ENCODE measurements at regions of chr6 and their contacts with region 1.

Region 1: DNA sequence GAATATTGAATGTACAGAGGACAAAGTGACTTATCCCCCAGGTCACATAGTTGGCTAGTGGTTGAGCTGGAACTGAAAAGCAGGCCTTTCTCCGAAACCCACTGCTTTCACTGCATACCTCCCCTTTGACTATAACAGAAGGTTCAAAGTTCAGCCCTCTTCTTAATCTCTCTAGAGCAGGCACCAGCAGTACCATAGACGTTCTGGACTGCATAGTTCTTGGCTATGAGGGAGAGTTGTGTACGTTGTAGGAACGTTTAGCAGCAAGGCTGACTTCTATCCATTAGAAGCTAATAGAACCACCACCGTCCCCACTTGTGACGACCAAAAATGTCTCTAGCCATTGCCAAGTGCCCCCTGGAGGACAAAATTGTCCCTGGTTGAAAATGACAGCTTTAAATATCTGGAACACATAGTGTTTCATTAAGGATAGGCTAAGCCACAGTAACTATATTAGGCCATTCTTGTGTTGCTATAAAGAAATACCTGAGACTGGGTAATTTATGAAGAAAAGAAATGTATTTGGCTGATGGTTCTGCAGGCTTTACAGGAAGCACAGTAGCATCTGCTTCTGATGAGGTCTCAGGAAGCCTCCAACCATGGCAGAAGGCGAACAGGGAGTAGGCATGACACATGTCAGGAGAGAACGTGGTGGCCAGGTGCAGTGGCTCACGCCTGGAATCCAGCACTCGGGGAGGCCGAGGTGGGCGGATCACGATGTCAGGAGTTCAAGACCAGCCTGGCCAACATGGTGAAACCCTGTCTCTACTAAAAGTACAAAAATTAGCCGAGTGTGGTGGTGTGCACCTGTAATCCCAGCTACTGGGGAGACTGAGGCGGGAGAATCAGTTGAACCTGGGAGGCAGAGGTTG is 123.6 kb upstream of the MTHFD1L start:
- DNase-seq: peak in 1 of 2 experiments; percentile 34
- H3K4me3 ChIP-seq: no peak overlapping the region
- H3K4me3 Mint-ChIP-seq: peak overlapping the region; percentile 37
- H3K27ac Mint-ChIP-seq: peak overlapping the region; percentile 67
- H3K4me1 ChIP-seq: peaks cover 37% of the 10 kb centered on the region
- H3K4me1 Mint-ChIP-seq: peaks cover 41% of the 10 kb centered on the region
- H3K27me3 ChIP-seq: no peaks in the 10 kb centered on the region
- H3K27me3 Mint-ChIP-seq: no peaks in the 10 kb centered on the region
- CTCF ChIP-seq: peak in 1 of 2 experiments; percentile 37

Region 2: GRCh38 chr6:150720774-150721233 is 21.1 kb before region 1 on chr6:
- CTCF ChIA-PET with region 1: no interaction called
- POLR2A ChIA-PET with region 1: no interaction called
- intact Hi-C with region 1: loop called (anchors 1 kb)
- DNase-seq: peak; percentile 71 to 76
- H3K4me3 ChIP-seq: peak overlapping the region; percentile 12; the same call in 1 of the 2 replicates
- H3K4me3 Mint-ChIP-seq: peak overlapping the region; percentile 74
- H3K27ac Mint-ChIP-seq: peak overlapping the region; percentile 94
- H3K4me1 ChIP-seq: peaks cover 30% of the 10 kb centered on the region
- H3K4me1 Mint-ChIP-seq: peaks cover 39% of the 10 kb centered on the region
- H3K27me3 ChIP-seq: no peaks in the 10 kb centered on the region
- H3K27me3 Mint-ChIP-seq: no peaks in the 10 kb centered on the region
- CTCF ChIP-seq: peak; percentile 28 to 40

Region 3: DNA sequence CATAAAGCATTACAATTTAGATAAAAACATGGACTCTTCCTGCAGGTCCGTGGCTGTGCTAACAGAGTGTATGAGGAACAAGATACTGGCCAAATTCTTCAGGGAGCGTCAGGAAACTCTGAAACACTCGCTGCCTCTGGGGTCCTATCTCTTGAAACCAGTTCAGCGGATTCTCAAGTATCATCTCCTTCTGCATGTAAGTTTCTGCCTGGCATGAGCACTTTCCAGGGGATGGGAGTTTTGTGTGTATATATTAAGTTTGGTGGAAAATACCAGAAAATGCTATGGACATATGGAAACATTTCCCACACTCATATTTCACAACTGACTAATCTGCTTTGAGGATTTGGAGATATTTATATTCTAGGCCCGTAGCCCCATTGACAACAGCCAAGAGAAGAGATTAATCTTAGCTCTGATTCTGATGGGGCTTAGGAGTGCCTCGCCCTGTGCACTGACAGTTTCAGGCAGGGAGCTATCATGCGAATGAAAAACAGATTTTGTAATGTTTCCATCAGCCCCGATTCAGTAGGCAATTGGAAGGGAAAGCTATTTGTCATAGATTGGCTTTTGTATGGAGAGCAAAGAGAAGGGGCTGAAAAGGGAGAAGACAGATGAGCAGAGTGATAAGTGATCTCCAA is 58.9 kb after region 1 on chr6:
- CTCF ChIA-PET with region 1: no interaction called
- POLR2A ChIA-PET with region 1: no interaction called
- intact Hi-C with region 1: no loop called
- DNase-seq: no peak
- H3K4me3 ChIP-seq: no peak overlapping the region
- H3K4me3 Mint-ChIP-seq: no peak overlapping the region
- H3K27ac Mint-ChIP-seq: no peak overlapping the region
- H3K4me1 ChIP-seq: no peaks in the 10 kb centered on the region
- H3K4me1 Mint-ChIP-seq: no peaks in the 10 kb centered on the region
- H3K27me3 ChIP-seq: no peaks in the 10 kb centered on the region
- H3K27me3 Mint-ChIP-seq: no peaks in the 10 kb centered on the region
- CTCF ChIP-seq: no peak

Measured in Caco-2 (cell line).